SK-N-SH (cell line): ENCODE measurements at regions of chr7 and their contacts with region 1.

Region 1: GRCh38 chr7:158976849-158977593 is 120.7 kb downstream of the DYNC2I1 start:
- DNase-seq: peak; percentile 93
- H3K4me3 ChIP-seq: peak overlapping the region; percentile 42 to 55
- H3K27ac ChIP-seq: no peak overlapping the region; a peak in 1 of 4 replicates
- H3K4me1 ChIP-seq: peaks cover 0 to 14% of the 10 kb centered on the region in 2 experiments; a peak in 1 of 4 replicates
- H3K27me3 ChIP-seq: no peaks in the 10 kb centered on the region
- CTCF ChIP-seq: peak; percentile 99
- EP300 ChIP-seq: no peak
- RAD21 ChIP-seq: peak; percentile 92

Region 2: DNA sequence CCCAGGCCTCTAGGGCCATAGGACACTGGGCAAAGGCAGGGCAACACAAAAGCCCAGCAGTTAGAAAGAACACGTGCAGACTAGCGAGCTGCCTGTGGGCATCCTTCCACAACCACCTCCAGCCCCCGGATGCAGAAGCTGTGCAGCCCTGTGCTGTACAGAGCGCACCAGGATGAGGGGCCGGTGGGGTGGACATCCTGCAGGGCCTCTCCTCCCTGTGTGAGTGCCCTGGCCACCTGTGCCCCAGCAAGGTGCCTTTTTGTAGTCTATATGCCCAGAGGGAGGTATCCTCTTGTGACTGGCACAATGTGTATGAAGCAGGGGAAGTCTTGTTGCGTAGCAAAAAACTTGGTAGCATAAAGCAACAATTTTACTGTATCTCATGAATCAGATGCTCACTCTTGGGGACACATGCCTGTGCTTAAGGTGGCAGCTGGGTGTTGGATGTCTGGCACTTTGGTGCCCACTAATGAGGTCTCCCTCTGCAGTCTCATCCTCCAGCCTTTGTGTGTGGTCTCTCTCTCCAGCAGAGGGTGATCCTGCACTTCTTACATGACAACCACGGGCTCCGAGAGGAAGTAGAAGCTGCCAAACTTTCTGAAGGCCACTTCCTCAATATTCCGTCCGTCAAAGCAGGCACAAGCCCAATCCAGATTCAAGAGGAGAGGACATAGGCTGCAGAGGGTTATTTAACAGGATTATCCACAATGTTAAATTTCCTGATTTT is 281.1 kb before region 1 on chr7:
- CTCF ChIA-PET with region 1: interaction called, 69 read pairs
- POLR2A ChIA-PET with region 1: no interaction called
- DNase-seq: peak; percentile 62
- H3K4me3 ChIP-seq: no peak overlapping the region
- H3K27ac ChIP-seq: peak overlapping the region; percentile 7 to 26; a peak in 2 of 4 replicates
- H3K4me1 ChIP-seq: peaks cover 0 to 2% of the 10 kb centered on the region in 2 experiments; a peak in 1 of 4 replicates
- H3K27me3 ChIP-seq: no peaks in the 10 kb centered on the region
- CTCF ChIP-seq: peak; percentile 79
- EP300 ChIP-seq: no peak
- RAD21 ChIP-seq: peak; percentile 89

Region 3: GRCh38 chr7:158904599-158904998 is 72.4 kb before region 1 on chr7:
- CTCF ChIA-PET with region 1: interaction called, 15 read pairs
- POLR2A ChIA-PET with region 1: no interaction called
- DNase-seq: peak; percentile 56
- H3K4me3 ChIP-seq: no peak overlapping the region
- H3K27ac ChIP-seq: no peak overlapping the region; a peak in 1 of 4 replicates
- H3K4me1 ChIP-seq: peaks cover 0 to 10% of the 10 kb centered on the region in 2 experiments; a peak in 1 of 4 replicates
- H3K27me3 ChIP-seq: no peaks in the 10 kb centered on the region
- CTCF ChIP-seq: no peak
- EP300 ChIP-seq: no peak
- RAD21 ChIP-seq: no peak

Region 4: GRCh38 chr7:158957921-158958491 is 19.0 kb before region 1 on chr7:
- CTCF ChIA-PET with region 1: interaction called, 61 read pairs
- POLR2A ChIA-PET with region 1: no interaction called
- DNase-seq: peak; percentile 79
- H3K4me3 ChIP-seq: peak overlapping the region in 1 of 2 experiments; percentile 36; a peak in 2 of 4 replicates
- H3K27ac ChIP-seq: no peak overlapping the region
- H3K4me1 ChIP-seq: peaks cover 0 to 17% of the 10 kb centered on the region in 2 experiments; a peak in 1 of 4 replicates
- H3K27me3 ChIP-seq: peaks cover 22% of the 10 kb centered on the region
- CTCF ChIP-seq: no peak
- EP300 ChIP-seq: no peak
- RAD21 ChIP-seq: no peak

Region 5: GRCh38 chr7:159000859-159001435 is 23.9 kb after region 1 on chr7:
- CTCF ChIA-PET with region 1: interaction called, 17 read pairs
- POLR2A ChIA-PET with region 1: interaction called, 3 read pairs
- DNase-seq: no peak
- H3K4me3 ChIP-seq: no peak overlapping the region
- H3K27ac ChIP-seq: no peak overlapping the region
- H3K4me1 ChIP-seq: peaks cover 0 to 6% of the 10 kb centered on the region in 2 experiments; a peak in 1 of 4 replicates
- H3K27me3 ChIP-seq: no peaks in the 10 kb centered on the region
- CTCF ChIP-seq: no peak
- EP300 ChIP-seq: no peak
- RAD21 ChIP-seq: no peak

Region 6: GRCh38 chr7:159177284-159177953 is 200.4 kb after region 1 on chr7:
- CTCF ChIA-PET with region 1: no interaction called
- POLR2A ChIA-PET with region 1: no interaction called
- DNase-seq: peak; percentile 1
- H3K4me3 ChIP-seq: no peak overlapping the region
- H3K27ac ChIP-seq: no peak overlapping the region
- H3K4me1 ChIP-seq: no peaks in the 10 kb centered on the region
- H3K27me3 ChIP-seq: no peaks in the 10 kb centered on the region
- CTCF ChIP-seq: no peak
- EP300 ChIP-seq: no peak
- RAD21 ChIP-seq: no peak